ENCODE measurements at regions of chr9 and their contacts with region 1.

Region 1: GRCh38 chr9:17810728-17811571 is 232.1 kb downstream of the SH3GL2 start:
- DNase-seq: peak; percentile 55
- H3K4me3 Mint-ChIP-seq: no peak overlapping the region
- H3K27ac Mint-ChIP-seq: no peak overlapping the region
- H3K4me1 Mint-ChIP-seq: peaks cover 19% of the 10 kb centered on the region
- H3K27me3 Mint-ChIP-seq: no peaks in the 10 kb centered on the region
- CTCF ChIP-seq: peak; percentile 57

Region 2: DNA sequence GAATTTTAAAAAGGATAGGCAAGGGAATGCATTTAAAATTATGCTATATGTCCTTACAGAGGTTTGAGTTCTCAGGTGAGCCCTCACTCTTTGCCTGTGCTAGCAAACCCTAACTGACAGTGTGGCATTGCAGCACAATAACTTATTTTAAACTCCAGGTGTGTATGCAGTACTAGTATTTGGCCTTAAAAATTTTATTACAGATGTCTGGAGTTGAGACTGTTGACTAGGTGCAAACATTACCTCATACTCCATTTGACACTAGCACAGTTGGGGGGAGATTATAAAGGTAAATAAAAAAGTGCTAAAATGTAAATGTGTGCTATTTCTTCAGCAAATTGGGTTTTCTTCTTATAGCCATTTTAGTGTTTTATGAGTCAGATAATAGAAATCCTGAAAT is 175.6 kb after region 1 on chr9:
- CTCF ChIA-PET with region 1: no interaction called
- intact Hi-C with region 1: no loop called
- DNase-seq: no peak
- H3K4me3 Mint-ChIP-seq: no peak overlapping the region
- H3K27ac Mint-ChIP-seq: no peak overlapping the region
- H3K4me1 Mint-ChIP-seq: no peaks in the 10 kb centered on the region
- H3K27me3 Mint-ChIP-seq: no peaks in the 10 kb centered on the region
- CTCF ChIP-seq: no peak

Region 3: DNA sequence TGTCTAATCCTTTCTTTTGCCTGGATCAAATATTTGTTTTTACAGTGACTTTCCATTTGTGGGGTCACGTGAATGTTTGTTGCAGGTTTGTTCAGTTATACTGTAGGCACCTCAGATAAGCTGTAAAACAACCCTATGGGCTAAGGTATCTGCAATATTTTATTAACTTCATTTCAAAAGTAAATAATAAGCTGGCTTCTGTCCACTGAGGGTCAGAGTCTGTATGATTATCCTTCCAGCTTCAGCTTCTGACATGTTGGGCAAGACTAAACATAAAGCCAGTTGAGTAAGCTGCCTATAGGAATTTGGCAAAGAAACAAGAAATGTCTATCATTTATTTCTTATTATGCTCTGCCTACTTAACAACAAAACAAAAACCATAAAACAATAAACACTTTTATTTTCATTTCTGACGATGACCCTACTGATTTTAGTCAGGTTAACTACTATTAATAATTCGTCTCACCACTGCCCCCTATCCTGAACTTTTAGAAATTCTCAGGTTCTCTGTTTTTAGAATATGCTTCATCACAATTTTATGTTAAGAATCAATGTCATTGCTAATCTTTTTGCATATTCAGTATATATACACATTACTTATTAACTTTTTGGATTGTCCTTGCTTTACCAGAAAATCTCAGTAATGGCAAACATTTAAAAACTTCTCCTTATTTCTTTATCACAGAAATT is 249.4 kb after region 1 on chr9:
- CTCF ChIA-PET with region 1: no interaction called
- intact Hi-C with region 1: loop called (anchors 5 kb)
- DNase-seq: no peak
- H3K4me3 Mint-ChIP-seq: no peak overlapping the region
- H3K27ac Mint-ChIP-seq: no peak overlapping the region
- H3K4me1 Mint-ChIP-seq: peaks cover 10% of the 10 kb centered on the region
- H3K27me3 Mint-ChIP-seq: no peaks in the 10 kb centered on the region
- CTCF ChIP-seq: peak; percentile 18

Region 4: DNA sequence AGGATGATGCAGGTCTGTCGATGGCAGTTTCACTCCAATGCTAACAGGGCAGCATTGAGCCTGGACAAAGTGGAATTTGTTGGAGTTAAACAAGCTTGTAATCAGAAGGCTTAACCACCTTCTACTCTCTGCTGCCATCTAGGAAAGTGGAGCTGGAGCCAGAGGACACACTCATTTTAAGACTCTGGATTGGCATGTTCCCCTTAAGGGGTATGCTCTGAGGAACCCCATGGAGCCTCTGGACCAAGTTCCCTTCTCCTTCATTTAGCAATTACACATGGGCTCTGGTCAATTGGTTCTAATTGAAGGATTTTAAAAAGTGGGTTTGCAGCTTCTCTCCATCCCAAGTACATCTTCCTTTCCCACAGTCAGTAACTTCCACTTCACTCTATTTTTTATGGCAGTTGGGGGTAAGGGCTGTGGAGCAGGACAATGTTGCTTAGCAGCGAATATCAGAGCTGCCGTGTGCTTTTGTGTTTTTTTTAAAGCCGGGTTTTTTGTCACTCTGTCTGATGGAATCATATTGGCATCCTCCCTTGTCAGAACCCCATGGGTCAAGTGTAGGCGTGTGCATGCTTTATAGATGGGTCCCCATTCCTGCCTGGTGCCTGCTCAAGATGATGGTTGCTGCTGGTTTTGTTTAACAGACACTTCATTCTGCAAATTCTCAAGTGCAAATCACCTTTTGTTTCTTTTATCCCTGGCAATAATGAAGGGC is 332.2 kb after region 1 on chr9:
- CTCF ChIA-PET with region 1: interaction called, 8 read pairs
- intact Hi-C with region 1: loop called (anchors 10 kb)
- DNase-seq: peak; percentile 4
- H3K4me3 Mint-ChIP-seq: no peak overlapping the region
- H3K27ac Mint-ChIP-seq: no peak overlapping the region
- H3K4me1 Mint-ChIP-seq: no peaks in the 10 kb centered on the region
- H3K27me3 Mint-ChIP-seq: no peaks in the 10 kb centered on the region
- CTCF ChIP-seq: no peak

Region 5: GRCh38 chr9:19028835-19029451 is 1218.0 kb after region 1 on chr9:
- CTCF ChIA-PET with region 1: no interaction called
- intact Hi-C with region 1: loop called (anchors 5 kb)
- DNase-seq: peak; percentile 42
- H3K4me3 Mint-ChIP-seq: no peak overlapping the region
- H3K27ac Mint-ChIP-seq: no peak overlapping the region
- H3K4me1 Mint-ChIP-seq: no peaks in the 10 kb centered on the region
- H3K27me3 Mint-ChIP-seq: peaks cover 15% of the 10 kb centered on the region
- CTCF ChIP-seq: peak; percentile 40